ENCODE measurements at regions of chr14 and their contacts with region 1.

Region 1: GRCh38 chr14:24806061-24806678 is 172.2 kb upstream of the GZMB start:
- DNase-seq: no peak
- H3K4me3 ChIP-seq: no peak overlapping the region
- H3K27me3 ChIP-seq: no peaks in the 10 kb centered on the region
- CTCF ChIP-seq: peak; percentile 83

Region 2: DNA sequence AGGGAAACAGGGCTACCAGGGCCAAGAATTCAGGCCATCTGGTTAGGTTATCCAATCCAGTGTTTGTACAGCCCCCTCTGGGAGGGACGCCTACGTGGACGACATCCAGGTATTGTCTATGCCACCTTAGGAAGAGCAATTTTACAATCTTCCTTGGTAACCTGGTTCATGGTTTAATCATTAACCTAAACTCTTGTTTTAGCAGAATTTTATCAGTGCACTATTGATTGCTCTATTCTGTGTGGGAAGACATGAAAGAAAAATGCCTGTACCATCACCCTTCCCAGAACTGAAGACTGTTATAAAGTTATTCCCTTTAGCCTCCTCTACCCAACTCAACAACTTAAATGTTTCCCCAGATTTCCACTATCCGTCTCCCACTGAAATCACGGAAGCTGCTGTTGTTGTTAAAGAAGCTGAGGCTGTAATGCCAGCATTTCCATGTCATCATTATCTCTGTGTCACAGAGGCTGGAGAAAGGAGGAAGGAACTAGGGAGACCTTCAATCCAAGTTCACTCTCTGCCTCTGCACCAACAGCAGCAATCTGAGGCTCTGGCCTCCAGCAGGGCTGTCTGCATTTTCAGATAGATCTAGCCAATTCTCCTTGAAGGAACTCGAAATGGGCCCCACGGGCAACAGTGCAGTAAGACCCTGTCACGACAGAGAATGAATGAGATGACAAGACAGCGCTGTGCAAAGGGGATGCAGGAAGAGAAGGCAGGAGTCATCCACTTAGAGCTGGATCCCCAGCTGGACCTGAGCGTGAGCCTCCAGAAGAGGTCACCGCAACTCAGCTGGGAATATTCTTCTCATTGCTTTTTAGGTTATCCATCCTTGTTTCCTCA is 11.3 kb after region 1 on chr14:
- CTCF ChIA-PET with region 1: interaction called, 12 read pairs
- POLR2A ChIA-PET with region 1: no interaction called
- DNase-seq: no peak
- H3K4me3 ChIP-seq: no peak overlapping the region
- H3K27me3 ChIP-seq: no peaks in the 10 kb centered on the region
- CTCF ChIP-seq: peak; percentile 72

Region 3: DNA sequence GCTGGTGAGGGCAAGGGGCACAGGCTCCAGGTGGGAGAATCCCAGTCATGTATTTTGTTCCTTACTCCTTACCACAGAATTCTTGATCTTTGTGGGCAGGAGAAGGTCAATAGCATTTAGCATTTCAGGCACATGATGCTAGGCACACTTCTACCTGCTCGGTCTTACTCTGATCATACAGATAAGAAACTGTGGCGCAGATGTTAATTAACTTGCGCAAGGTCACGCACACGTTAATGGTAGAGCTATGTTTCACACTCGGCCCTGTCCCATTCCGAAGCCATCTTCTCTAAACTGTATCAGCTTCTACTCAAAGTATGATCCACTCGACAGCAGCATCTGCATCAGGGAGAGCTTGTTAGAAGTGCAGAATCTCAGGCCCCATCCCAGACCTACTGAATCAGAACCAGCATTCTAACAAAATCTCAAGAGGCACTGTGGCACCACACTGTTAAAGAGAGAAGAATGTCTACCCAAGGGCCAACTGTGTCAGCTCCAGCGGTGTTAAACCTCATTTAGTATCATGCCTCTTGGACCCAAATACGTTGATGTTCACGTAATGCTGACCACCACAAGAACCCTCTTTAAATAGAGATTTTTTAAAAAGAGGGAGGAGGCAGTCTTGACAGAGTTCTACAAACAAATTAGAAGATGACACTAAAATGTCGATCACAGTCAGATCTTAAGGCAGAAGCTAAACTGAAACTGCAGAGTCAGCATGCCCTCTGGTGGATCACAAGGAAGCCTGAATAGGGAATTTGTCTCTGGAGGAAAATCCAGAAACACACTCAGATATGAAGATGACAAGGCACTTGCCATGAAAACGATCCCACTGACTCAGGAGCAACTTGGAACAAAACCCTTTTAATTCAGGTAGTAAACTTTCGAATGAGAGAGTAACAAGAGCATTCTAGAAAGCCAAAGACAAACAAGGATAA is 236.5 kb after region 1 on chr14:
- CTCF ChIA-PET with region 1: interaction called, 30 read pairs
- POLR2A ChIA-PET with region 1: no interaction called
- DNase-seq: no peak
- H3K4me3 ChIP-seq: no peak overlapping the region
- H3K27me3 ChIP-seq: no peaks in the 10 kb centered on the region
- CTCF ChIP-seq: peak; percentile 63

Region 4: GRCh38 chr14:25049568-25050268 is 243.5 kb after region 1 on chr14 and contains the start of gene STXBP6:
- CTCF ChIA-PET with region 1: interaction called, 27 read pairs
- POLR2A ChIA-PET with region 1: no interaction called
- DNase-seq: no peak
- H3K4me3 ChIP-seq: peak within 1 kb of the TSS; percentile 66
- H3K27me3 ChIP-seq: no peaks in the 10 kb centered on the region
- CTCF ChIP-seq: no peak
- polyA plus RNA-seq, gene STXBP6: 12.1 and 16.8 TPM in 2 replicates

Region 5: GRCh38 chr14:25150934-25151790 is 345.0 kb after region 1 on chr14:
- CTCF ChIA-PET with region 1: interaction called, 32 read pairs
- POLR2A ChIA-PET with region 1: no interaction called
- DNase-seq: no peak
- H3K4me3 ChIP-seq: no peak overlapping the region
- H3K27me3 ChIP-seq: no peaks in the 10 kb centered on the region
- CTCF ChIP-seq: peak; percentile 72